ENCODE measurements at regions of chr4 and their contacts with region 1.

Region 1: DNA sequence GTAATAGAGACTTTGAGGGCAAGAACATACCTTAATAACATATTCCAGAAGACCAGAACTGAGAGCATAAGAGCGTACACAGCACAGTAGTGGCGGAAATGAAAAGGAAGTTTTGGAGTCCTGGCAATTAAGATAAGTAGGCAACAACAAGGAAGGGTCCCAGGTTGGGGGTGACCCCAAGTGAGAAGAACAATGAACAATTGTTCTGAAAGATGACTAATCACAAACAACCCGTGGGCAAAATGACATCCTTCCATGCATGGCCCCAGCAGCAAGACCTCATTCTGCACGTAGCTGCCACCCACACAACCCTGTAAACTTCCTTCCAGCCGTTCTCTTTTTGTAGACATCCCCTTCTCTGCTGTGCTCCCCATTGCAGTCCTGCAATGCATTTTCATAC is 384.4 kb upstream of the PABPC4L start:
- DNase-seq: peak; percentile 97
- H3K4me3 ChIP-seq: no peak overlapping the region
- H3K27ac ChIP-seq: peak overlapping the region; percentile 86
- H3K4me1 ChIP-seq: peaks cover 17% of the 10 kb centered on the region
- H3K27me3 ChIP-seq: no peaks in the 10 kb centered on the region
- CTCF ChIP-seq: no peak
- POLR2A ChIP-seq: peak; percentile 79

Region 2: GRCh38 chr4:133910105-133910504 is 675.9 kb before region 1 on chr4:
- CTCF ChIA-PET with region 1: no interaction called
- POLR2A ChIA-PET with region 1: no interaction called
- dilution Hi-C with region 1: no loop called
- intact Hi-C with region 1: no loop called
- DNase-seq: no peak
- H3K4me3 ChIP-seq: no peak overlapping the region
- H3K27ac ChIP-seq: no peak overlapping the region
- H3K4me1 ChIP-seq: no peaks in the 10 kb centered on the region
- H3K27me3 ChIP-seq: no peaks in the 10 kb centered on the region
- CTCF ChIP-seq: no peak
- POLR2A ChIP-seq: no peak

Region 3: GRCh38 chr4:134628066-134628465 is 42.1 kb after region 1 on chr4:
- CTCF ChIA-PET with region 1: no interaction called
- POLR2A ChIA-PET with region 1: no interaction called
- dilution Hi-C with region 1: no loop called
- intact Hi-C with region 1: loop called (anchors 1 kb)
- DNase-seq: no peak
- H3K4me3 ChIP-seq: no peak overlapping the region
- H3K27ac ChIP-seq: no peak overlapping the region
- H3K4me1 ChIP-seq: peaks cover 13% of the 10 kb centered on the region
- H3K27me3 ChIP-seq: no peaks in the 10 kb centered on the region
- CTCF ChIP-seq: no peak
- POLR2A ChIP-seq: no peak

Region 4: DNA sequence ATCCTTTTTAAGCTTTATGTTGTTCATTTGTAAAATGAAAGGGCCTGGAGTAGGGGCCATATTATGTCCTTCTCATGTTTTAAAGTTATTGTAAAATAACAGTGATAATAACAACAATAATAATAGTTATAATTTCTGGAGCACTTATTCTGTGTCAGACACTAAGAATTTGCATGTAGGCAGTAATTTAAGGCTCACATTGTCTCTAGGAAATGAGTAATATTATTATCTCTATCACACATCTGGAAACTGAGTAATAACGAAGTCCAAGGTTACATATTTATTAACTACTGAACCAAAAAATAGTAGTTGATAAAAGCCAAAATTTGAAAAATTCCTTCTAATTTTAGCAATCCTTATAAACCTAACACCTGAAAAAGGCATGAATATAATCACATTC is 136.3 kb after region 1 on chr4:
- CTCF ChIA-PET with region 1: no interaction called
- POLR2A ChIA-PET with region 1: no interaction called
- dilution Hi-C with region 1: no loop called
- intact Hi-C with region 1: loop called (anchors 5 kb)
- DNase-seq: peak; percentile 69
- H3K4me3 ChIP-seq: no peak overlapping the region
- H3K27ac ChIP-seq: peak overlapping the region; percentile 51
- H3K4me1 ChIP-seq: peaks cover 12% of the 10 kb centered on the region
- H3K27me3 ChIP-seq: no peaks in the 10 kb centered on the region
- CTCF ChIP-seq: no peak
- POLR2A ChIP-seq: no peak